Gastrocnemius medialis (tissue), 4 donors: ENCODE measurements at regions of chr7 and their contacts with region 1.

Region 1: GRCh38 chr7:94087664-94088352 is 83.7 kb upstream of the BET1 start:
- DNase-seq: no peak
- ATAC-seq: peak in 1 of 2 donors; percentile 55
- H3K4me3 ChIP-seq: peak overlapping the region in 3 of 4 donors; percentile 14 to 27 (median 16)
- H3K27ac ChIP-seq: no peak overlapping the region
- H3K4me1 ChIP-seq: peaks cover 0 to 4% of the 10 kb centered on the region in 2 donors
- H3K27me3 ChIP-seq: no peaks in the 10 kb centered on the region
- CTCF ChIP-seq: peak in 4 of 5 experiments; percentile 33 to 68 (median 55)
- POLR2A ChIP-seq: no peak

Region 2: DNA sequence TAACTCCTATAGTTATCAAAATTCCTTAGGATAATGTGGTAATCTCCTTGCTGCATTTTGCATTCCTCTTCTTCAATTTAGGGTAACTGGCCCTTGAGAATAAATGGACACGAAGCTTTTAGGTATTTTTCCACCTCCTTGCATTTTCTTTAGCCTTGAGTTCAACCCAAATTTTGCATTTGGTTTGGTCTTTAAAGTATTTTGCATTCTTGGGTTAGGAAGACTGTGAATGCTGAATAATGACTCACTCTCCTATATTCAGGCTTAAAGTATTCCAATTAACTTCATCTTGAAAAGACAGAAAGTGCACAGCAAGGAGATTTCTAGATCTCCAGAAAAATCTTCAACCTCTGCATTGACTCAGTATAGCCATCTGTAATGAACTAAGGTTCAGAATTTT is 244.5 kb before region 1 on chr7:
- in situ Hi-C with region 1: no loop called
- intact Hi-C with region 1: no loop called
- DNase-seq: no peak
- ATAC-seq: no peak
- H3K4me3 ChIP-seq: no peak overlapping the region
- H3K27ac ChIP-seq: no peak overlapping the region
- H3K4me1 ChIP-seq: no peaks in the 10 kb centered on the region
- H3K27me3 ChIP-seq: no peaks in the 10 kb centered on the region
- CTCF ChIP-seq: no peak
- POLR2A ChIP-seq: no peak

Region 3: DNA sequence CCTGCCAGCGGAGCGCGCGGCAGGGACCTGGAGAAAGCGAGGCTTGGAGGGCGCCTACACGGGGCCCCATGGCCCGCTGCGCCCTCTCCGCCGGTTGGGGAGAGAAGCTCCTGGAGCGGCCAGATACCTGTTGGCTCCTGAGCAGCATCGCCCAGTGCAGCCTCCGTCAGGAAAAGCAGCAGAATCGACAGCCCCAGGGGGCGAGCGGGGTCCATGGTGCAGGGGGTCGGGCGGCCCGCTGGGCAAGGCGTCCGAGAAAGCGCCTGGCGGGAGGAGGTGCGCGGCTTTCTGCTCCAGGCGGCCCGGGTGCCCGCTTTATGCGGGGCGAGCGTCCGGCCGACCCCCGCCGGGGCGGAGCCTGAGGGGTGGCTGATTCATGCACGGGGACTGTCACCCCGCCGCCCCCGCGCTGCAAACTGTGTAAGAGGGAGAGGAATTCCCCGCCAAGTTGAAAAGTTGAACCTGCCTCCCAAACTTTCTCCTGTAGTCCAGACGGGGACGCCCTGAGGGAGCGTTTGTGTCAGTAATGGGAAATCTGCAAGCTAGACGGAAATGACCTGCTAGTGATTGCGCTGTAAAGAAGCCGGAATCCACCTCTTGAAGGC is 197.2 kb before region 1 on chr7 and contains the start of gene TFPI2:
- in situ Hi-C with region 1: loop called in 2 of 4 experiments (anchors 25 kb)
- intact Hi-C with region 1: no loop called
- DNase-seq: no peak
- ATAC-seq: peak in 1 of 2 donors; percentile 30
- H3K4me3 ChIP-seq: peak within 1 kb of the TSS; percentile 36 to 58 (median 50)
- H3K27ac ChIP-seq: peak within 1 kb of the TSS in 3 of 4 donors; percentile 7 to 42 (median 30)
- H3K4me1 ChIP-seq: peaks cover 0 to 3% of the 10 kb centered on the region in 2 donors
- H3K27me3 ChIP-seq: peaks cover 0 to 19% (median 0%) of the 10 kb centered on the region in 3 donors
- CTCF ChIP-seq: no peak
- POLR2A ChIP-seq: peak in 1 of 2 donors; percentile 27
- total RNA-seq, gene TFPI2: 1.3 to 3.7 (median 1.5) TPM in 3 of 4 donors, not detected in the other

Region 4: DNA sequence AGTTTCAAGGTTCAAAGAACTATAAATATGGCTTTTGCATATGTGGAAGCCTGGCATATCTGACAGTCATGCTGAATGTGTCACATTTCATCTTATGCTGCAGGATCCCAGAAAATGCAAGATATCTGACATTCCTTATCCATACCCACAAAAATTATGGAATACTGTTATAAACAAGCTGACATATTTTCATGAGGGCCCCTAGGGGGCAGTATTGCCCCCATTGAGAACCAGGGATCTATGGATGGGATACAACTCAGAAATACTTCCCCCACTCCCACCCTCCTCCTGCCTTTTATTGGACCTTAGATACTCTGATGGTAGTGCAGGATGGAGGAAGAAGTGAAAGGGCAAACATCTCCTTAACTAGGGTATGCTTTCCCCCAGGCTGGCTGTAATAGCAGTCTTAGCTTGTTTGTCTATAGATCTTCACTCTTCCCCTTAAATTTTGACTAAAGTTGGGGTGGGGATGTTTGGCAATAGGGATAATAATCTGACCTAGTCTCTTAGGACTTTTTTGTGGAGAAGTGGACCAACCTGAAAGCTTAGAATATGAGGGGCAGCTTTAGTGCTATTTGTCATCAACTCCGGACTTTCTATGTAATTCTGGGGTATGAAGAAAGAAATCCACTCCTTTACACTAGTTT is 184.9 kb before region 1 on chr7:
- in situ Hi-C with region 1: loop called in 3 of 4 experiments (anchors 10 to 25 kb)
- intact Hi-C with region 1: loop called (anchors 5 kb)
- DNase-seq: no peak
- ATAC-seq: no peak
- H3K4me3 ChIP-seq: no peak overlapping the region
- H3K27ac ChIP-seq: no peak overlapping the region
- H3K4me1 ChIP-seq: no peaks in the 10 kb centered on the region
- H3K27me3 ChIP-seq: no peaks in the 10 kb centered on the region
- CTCF ChIP-seq: peak in 4 of 5 experiments; percentile 43 to 65 (median 48)
- POLR2A ChIP-seq: no peak

Region 5: DNA sequence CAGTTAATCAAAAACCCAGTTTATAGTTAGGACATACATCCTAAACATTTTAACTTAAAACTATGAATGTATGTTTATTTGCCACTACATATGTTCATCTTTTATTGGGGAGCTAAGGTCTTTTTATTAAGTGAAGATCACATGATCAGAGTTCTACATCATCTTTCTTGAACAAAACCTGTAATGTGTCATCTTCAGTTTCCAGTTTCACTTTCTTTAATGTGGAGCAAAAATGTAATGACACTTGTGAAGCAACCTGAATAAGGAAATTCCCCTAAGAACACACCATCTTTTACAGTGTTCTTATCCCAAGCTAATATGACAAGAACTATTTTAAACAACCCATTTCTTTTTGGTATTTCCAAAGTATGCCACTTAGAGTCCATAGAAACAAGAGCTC is 83.0 kb after region 1 on chr7:
- in situ Hi-C with region 1: no loop called
- intact Hi-C with region 1: no loop called
- DNase-seq: no peak
- ATAC-seq: no peak
- H3K4me3 ChIP-seq: no peak overlapping the region
- H3K27ac ChIP-seq: peak overlapping the region in 1 of 4 donors; percentile 22
- H3K4me1 ChIP-seq: no peaks in the 10 kb centered on the region
- H3K27me3 ChIP-seq: no peaks in the 10 kb centered on the region
- CTCF ChIP-seq: no peak
- POLR2A ChIP-seq: no peak

Region 6: GRCh38 chr7:94994016-94994415 is 906.2 kb after region 1 on chr7:
- in situ Hi-C with region 1: no loop called
- intact Hi-C with region 1: no loop called
- DNase-seq: no peak
- ATAC-seq: no peak
- H3K4me3 ChIP-seq: no peak overlapping the region
- H3K27ac ChIP-seq: no peak overlapping the region
- H3K4me1 ChIP-seq: peaks cover 0 to 4% of the 10 kb centered on the region in 2 donors
- H3K27me3 ChIP-seq: no peaks in the 10 kb centered on the region
- CTCF ChIP-seq: no peak
- POLR2A ChIP-seq: no peak